Heart right ventricle (tissue), 16 donors: ENCODE measurements at regions of chr15 and their contacts with region 1.

Region 1: GRCh38 chr15:64841258-64842095 is at the start of gene PLEKHO2:
- DNase-seq: peak; percentile 97 to 98
- ATAC-seq: peak; percentile 88 to 94 (median 89)
- H3K4me3 ChIP-seq: peak within 1 kb of the TSS; percentile 74 to 100 (median 94)
- H3K27ac ChIP-seq: peak within 1 kb of the TSS; percentile 91 to 99 (median 98)
- H3K4me1 ChIP-seq: peaks cover 17 to 62% (median 42%) of the 10 kb centered on the region in 9 donors
- H3K27me3 ChIP-seq: no peaks in the 10 kb centered on the region
- CTCF ChIP-seq: peak in 4 of 9 donors; percentile 28 to 43 (median 36)
- total RNA-seq, gene PLEKHO2: 5.9 to 24.2 (median 9.7) TPM

Region 2: DNA sequence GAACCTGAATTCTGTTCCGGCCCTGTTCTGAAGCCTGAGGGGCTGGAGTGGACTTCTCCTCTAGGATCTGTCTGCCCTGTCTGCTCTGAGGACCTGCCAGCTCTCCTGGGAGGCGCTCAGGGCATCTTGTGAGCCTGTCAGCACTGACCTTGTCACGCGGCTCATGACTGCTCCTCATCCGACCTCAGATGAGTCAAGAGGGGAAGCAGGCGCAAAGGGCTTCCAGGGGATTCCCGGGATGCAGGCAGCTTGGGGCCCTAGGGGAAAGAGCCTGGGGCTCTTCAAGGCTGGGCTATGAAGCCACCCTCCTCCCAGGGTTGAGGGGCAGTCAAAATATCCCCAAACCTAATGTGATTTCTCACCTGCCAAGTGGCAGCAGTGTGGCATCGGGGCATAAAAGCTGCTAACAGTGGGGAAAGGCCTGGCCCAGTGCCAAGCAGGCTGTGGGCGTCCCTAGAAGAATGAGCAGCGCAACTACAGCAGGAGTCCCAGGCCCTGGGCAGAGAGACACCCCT is 42.6 kb after region 1 on chr15:
- intact Hi-C with region 1: loop called in 1 of 10 experiments (anchors 5 kb)
- DNase-seq: peak; percentile 64 to 80
- ATAC-seq: peak; percentile 70 to 87 (median 80)
- H3K4me3 ChIP-seq: no peak overlapping the region
- H3K27ac ChIP-seq: peak overlapping the region in 8 of 10 donors; percentile 45 to 88 (median 72)
- H3K4me1 ChIP-seq: peaks cover 3 to 60% (median 19%) of the 10 kb centered on the region in 9 donors
- H3K27me3 ChIP-seq: no peaks in the 10 kb centered on the region
- CTCF ChIP-seq: no peak

Region 3: GRCh38 chr15:64893481-64894394 is 52.3 kb after region 1 on chr15:
- intact Hi-C with region 1: loop called in 6 of 10 experiments (anchors 2 to 5 kb)
- DNase-seq: peak; percentile 96 to 97
- ATAC-seq: peak; percentile 76 to 91 (median 87)
- H3K4me3 ChIP-seq: peak overlapping the region in 9 of 10 donors; percentile 1 to 48 (median 38)
- H3K27ac ChIP-seq: peak overlapping the region; percentile 64 to 98 (median 89)
- H3K4me1 ChIP-seq: peaks cover 22 to 78% (median 55%) of the 10 kb centered on the region in 9 donors
- H3K27me3 ChIP-seq: no peaks in the 10 kb centered on the region
- CTCF ChIP-seq: no peak

Region 4: GRCh38 chr15:64989416-64990167 is 148.1 kb after region 1 on chr15 and contains the start of gene SPG21:
- intact Hi-C with region 1: loop called in 1 of 10 experiments (anchors 10 kb)
- DNase-seq: peak; percentile 94 to 95
- ATAC-seq: peak; percentile 96 to 97 (median 96)
- H3K4me3 ChIP-seq: peak within 1 kb of the TSS; percentile 81 to 99 (median 95)
- H3K27ac ChIP-seq: peak within 1 kb of the TSS; percentile 81 to 97 (median 93)
- H3K4me1 ChIP-seq: peaks cover 0 to 48% (median 21%) of the 10 kb centered on the region in 9 donors
- H3K27me3 ChIP-seq: no peaks in the 10 kb centered on the region
- CTCF ChIP-seq: no peak
- total RNA-seq, gene SPG21: 36.4 to 56.6 (median 45.9) TPM